ENCODE measurements at regions of chr21 and their contacts with region 1.

Region 1: GRCh38 chr21:25607151-25608043 is at the start of gene MRPL39:
- DNase-seq: peak; percentile 84
- H3K4me3 ChIP-seq: peak within 1 kb of the TSS; percentile 88 to 93 (median 89)
- H3K27ac ChIP-seq: peak within 1 kb of the TSS; percentile 73
- H3K4me1 ChIP-seq: peaks cover 11% of the 10 kb centered on the region
- H3K27me3 ChIP-seq: no peaks in the 10 kb centered on the region
- CTCF ChIP-seq: peak; percentile 43 to 73
- total RNA-seq, gene MRPL39: 26.2 to 53.8 TPM

Region 2: DNA sequence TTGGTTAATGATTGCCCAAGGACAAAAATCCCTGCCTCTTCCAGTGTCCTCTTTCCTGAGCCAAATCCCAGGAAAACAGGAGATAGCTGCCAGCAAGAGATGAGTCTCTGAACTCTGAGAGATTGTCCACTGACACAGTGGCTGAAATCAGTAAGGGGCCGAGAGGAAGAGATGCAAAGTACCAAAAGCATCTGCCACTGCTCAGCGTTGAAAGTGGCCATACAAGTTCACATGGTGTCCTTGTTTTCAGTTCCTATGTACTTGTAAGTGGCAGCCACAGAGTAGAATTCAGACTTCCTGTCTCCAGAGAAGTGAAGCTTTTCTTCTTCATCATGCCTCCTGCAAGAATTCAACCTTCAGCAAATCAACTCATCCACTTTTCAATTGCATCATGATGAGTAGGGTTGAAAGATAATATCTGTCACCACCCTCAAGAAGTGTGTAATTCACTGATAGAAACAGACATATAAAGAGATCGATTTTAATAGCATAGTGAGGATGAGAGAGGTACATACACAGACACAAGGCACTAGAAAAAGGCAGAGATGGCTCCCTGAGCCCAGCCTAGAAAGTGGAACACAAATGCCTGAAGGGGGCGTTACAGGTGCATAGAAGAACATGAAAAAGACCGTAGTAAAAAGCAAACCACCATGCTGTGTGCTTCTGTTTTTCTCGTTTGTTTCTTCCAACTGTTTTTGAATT is 185.9 kb before region 1 on chr21:
- CTCF ChIA-PET with region 1: no interaction called
- dilution Hi-C with region 1: no loop called
- in situ Hi-C with region 1: no loop called
- intact Hi-C with region 1: no loop called
- DNase-seq: no peak
- H3K4me3 ChIP-seq: no peak overlapping the region
- H3K27ac ChIP-seq: no peak overlapping the region
- H3K4me1 ChIP-seq: no peaks in the 10 kb centered on the region
- H3K27me3 ChIP-seq: no peaks in the 10 kb centered on the region
- CTCF ChIP-seq: peak in 1 of 2 donors; percentile 15

Region 3: DNA sequence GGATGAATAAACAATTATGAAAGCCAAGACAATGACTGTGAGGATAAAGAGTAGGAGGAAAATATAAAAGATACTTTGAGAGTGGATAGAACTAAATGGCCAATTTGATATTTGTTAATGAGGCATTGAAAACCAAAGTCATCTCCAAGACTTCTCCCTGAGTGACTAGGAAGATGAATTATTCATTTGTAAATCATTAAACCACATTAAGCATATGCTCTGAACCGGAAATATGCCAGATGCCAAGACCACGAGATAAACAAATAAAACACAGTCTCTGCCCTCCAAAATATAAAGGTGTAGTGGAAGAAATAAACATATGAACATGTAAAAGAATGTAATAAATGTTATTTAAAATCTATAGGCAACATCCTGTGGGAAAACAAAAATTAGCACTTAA is 78.9 kb before region 1 on chr21:
- CTCF ChIA-PET with region 1: no interaction called
- dilution Hi-C with region 1: no loop called
- in situ Hi-C with region 1: no loop called
- intact Hi-C with region 1: no loop called
- DNase-seq: no peak
- H3K4me3 ChIP-seq: no peak overlapping the region
- H3K27ac ChIP-seq: no peak overlapping the region
- H3K4me1 ChIP-seq: no peaks in the 10 kb centered on the region
- H3K27me3 ChIP-seq: no peaks in the 10 kb centered on the region
- CTCF ChIP-seq: no peak

Region 4: DNA sequence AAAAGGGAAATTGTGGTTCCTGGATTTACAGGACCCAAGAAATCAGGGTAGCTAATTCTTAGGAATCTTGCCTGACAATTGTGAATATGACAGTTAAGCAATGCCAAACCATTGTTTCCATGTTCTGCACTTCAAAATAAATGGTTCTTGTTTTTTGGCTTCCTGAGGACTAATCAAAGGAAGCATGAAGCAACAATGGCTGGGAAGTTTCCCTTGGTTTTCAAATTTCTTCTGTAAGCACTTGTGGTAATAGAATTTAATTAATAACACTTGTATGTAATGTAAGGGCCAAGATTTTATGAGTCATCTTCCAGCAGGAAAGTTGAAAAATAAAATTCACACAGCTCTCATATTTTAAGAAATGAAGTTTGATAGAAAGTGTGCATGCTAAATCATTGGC is 63.3 kb after region 1 on chr21:
- CTCF ChIA-PET with region 1: no interaction called
- dilution Hi-C with region 1: no loop called
- in situ Hi-C with region 1: no loop called
- intact Hi-C with region 1: no loop called
- DNase-seq: peak; percentile 3
- H3K4me3 ChIP-seq: no peak overlapping the region
- H3K27ac ChIP-seq: no peak overlapping the region
- H3K4me1 ChIP-seq: no peaks in the 10 kb centered on the region
- H3K27me3 ChIP-seq: no peaks in the 10 kb centered on the region
- CTCF ChIP-seq: no peak

Region 5: DNA sequence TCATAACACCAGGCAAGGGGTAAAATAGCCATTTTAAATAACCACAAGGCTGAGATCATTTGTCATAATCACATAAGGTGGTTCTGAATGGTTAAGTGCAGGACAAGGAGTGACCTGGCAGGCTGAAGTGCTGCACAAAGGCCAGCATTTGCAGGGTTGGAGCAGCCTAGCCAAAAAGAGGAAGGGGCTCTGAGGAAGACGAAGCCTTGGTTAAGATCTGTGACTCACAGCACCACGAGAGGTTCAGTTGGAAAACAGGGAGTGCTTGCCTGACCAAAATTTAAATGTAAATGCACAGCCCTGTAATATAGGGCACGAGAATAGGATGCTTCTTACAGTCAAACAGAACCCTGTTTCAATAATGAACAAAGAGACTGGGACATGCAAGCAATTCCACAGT is 115.2 kb after region 1 on chr21:
- CTCF ChIA-PET with region 1: no interaction called
- dilution Hi-C with region 1: no loop called
- in situ Hi-C with region 1: loop called in 1 of 2 experiments (anchors 10 kb)
- intact Hi-C with region 1: no loop called
- DNase-seq: no peak
- H3K4me3 ChIP-seq: no peak overlapping the region
- H3K27ac ChIP-seq: no peak overlapping the region
- H3K4me1 ChIP-seq: no peaks in the 10 kb centered on the region
- H3K27me3 ChIP-seq: no peaks in the 10 kb centered on the region
- CTCF ChIP-seq: no peak

Region 6: GRCh38 chr21:25801217-25802014 is 194.0 kb after region 1 on chr21:
- CTCF ChIA-PET with region 1: no interaction called
- dilution Hi-C with region 1: no loop called
- in situ Hi-C with region 1: no loop called
- intact Hi-C with region 1: loop called (anchors 1 kb)
- DNase-seq: peak; percentile 59
- H3K4me3 ChIP-seq: no peak overlapping the region
- H3K27ac ChIP-seq: no peak overlapping the region
- H3K4me1 ChIP-seq: no peaks in the 10 kb centered on the region
- H3K27me3 ChIP-seq: peaks cover 2% of the 10 kb centered on the region
- CTCF ChIP-seq: peak; percentile 93 to 100

Region 7: GRCh38 chr21:26715878-26716506 is 1108.6 kb after region 1 on chr21:
- CTCF ChIA-PET with region 1: no interaction called
- dilution Hi-C with region 1: no loop called
- in situ Hi-C with region 1: loop called (anchors 25 kb)
- intact Hi-C with region 1: loop called (anchors 2 kb)
- DNase-seq: peak; percentile 42
- H3K4me3 ChIP-seq: peak overlapping the region in 1 of 3 experiments; percentile 23
- H3K27ac ChIP-seq: no peak overlapping the region
- H3K4me1 ChIP-seq: peaks cover 4% of the 10 kb centered on the region
- H3K27me3 ChIP-seq: no peaks in the 10 kb centered on the region
- CTCF ChIP-seq: peak; percentile 85 to 86

Measured in mammary epithelial cell (primary cell).